CD8-positive, alpha-beta T cell (primary cell): ENCODE measurements at regions of chr17 and their contacts with region 1.

Region 1: DNA sequence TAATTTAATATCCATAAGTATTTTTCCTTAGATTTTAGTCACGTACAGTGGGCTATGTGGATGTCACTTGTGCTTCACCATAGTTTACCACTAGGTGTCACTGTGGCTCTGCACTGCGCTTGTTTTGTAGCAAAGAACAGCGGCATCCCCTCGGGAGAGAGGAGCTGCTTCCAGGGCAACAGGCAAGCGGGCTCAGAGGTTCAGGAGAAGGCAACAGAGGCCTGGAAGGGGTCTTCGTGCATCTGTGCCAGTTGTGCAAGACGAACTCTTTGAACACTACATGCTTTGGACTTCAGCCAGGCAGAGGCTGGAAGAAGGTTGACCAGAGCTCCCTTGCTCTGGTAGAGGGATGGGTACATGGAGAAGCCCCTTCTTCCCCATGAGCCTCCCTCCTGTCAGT is 20.6 kb downstream of the CYB561 start:
- DNase-seq: peak; percentile 35 to 84 (median 73)
- ATAC-seq: peak; percentile 84
- H3K4me3 ChIP-seq: no peak overlapping the region
- H3K4me3 Mint-ChIP-seq: no peak overlapping the region
- H3K27ac ChIP-seq: no peak overlapping the region
- H3K27ac Mint-ChIP-seq: no peak overlapping the region
- H3K4me1 ChIP-seq: peaks cover 29% of the 10 kb centered on the region
- H3K4me1 Mint-ChIP-seq: peaks cover 43% of the 10 kb centered on the region
- H3K27me3 ChIP-seq: no peaks in the 10 kb centered on the region
- H3K27me3 Mint-ChIP-seq: no peaks in the 10 kb centered on the region
- CTCF ChIP-seq: peak; percentile 99

Region 2: GRCh38 chr17:63406689-63407330 is 18.7 kb before region 1 on chr17:
- CTCF ChIA-PET with region 1: interaction called, 26 read pairs
- POLR2A ChIA-PET with region 1: interaction called, 4 read pairs
- intact Hi-C with region 1: no loop called
- DNase-seq: peak; percentile 35 to 85 (median 65)
- ATAC-seq: peak; percentile 87
- H3K4me3 ChIP-seq: no peak overlapping the region
- H3K4me3 Mint-ChIP-seq: no peak overlapping the region
- H3K27ac ChIP-seq: no peak overlapping the region
- H3K27ac Mint-ChIP-seq: no peak overlapping the region
- H3K4me1 ChIP-seq: no peaks in the 10 kb centered on the region
- H3K4me1 Mint-ChIP-seq: peaks cover 2% of the 10 kb centered on the region
- H3K27me3 ChIP-seq: no peaks in the 10 kb centered on the region
- H3K27me3 Mint-ChIP-seq: no peaks in the 10 kb centered on the region
- CTCF ChIP-seq: peak; percentile 83

Region 3: DNA sequence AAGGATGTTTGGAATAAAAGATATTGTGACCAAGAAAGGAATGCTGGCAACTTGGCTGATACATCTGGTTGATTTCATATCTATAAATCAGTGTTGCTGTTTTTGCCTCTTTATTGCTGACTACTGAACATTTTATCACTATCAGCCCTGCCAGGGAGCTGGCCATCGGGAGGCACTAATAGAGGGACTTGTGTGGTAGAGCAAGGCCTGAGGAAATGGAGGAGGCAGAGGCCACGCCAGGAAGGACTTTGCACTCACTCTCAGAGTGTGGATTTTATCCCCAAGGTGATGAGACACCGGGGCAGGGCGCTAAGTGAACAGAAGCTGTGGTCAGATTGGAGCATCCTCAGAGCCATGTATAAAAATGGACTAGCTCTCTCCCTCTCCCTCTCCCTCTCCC is 29.9 kb after region 1 on chr17:
- CTCF ChIA-PET with region 1: interaction called, 10 read pairs
- POLR2A ChIA-PET with region 1: no interaction called
- intact Hi-C with region 1: no loop called
- DNase-seq: no peak
- ATAC-seq: no peak
- H3K4me3 ChIP-seq: no peak overlapping the region
- H3K4me3 Mint-ChIP-seq: no peak overlapping the region
- H3K27ac ChIP-seq: no peak overlapping the region
- H3K27ac Mint-ChIP-seq: no peak overlapping the region
- H3K4me1 ChIP-seq: no peaks in the 10 kb centered on the region
- H3K4me1 Mint-ChIP-seq: peaks cover 4% of the 10 kb centered on the region
- H3K27me3 ChIP-seq: no peaks in the 10 kb centered on the region
- H3K27me3 Mint-ChIP-seq: peaks cover 2% of the 10 kb centered on the region
- CTCF ChIP-seq: no peak

Region 4: GRCh38 chr17:63549946-63550807 is 124.7 kb after region 1 on chr17 and contains the start of gene DCAF7:
- CTCF ChIA-PET with region 1: interaction called, 13 read pairs
- POLR2A ChIA-PET with region 1: interaction called, 6 read pairs
- intact Hi-C with region 1: loop called in 1 of 2 experiments (anchors 10 kb)
- DNase-seq: peak; percentile 99 to 100 (median 99)
- ATAC-seq: peak; percentile 94
- H3K4me3 ChIP-seq: peak within 1 kb of the TSS; percentile 99 to 100
- H3K4me3 Mint-ChIP-seq: peak within 1 kb of the TSS; percentile 98
- H3K27ac ChIP-seq: peak within 1 kb of the TSS; percentile 86 to 97
- H3K27ac Mint-ChIP-seq: peak within 1 kb of the TSS; percentile 98
- H3K4me1 ChIP-seq: peaks cover 39% of the 10 kb centered on the region
- H3K4me1 Mint-ChIP-seq: peaks cover 45% of the 10 kb centered on the region
- H3K27me3 ChIP-seq: no peaks in the 10 kb centered on the region
- H3K27me3 Mint-ChIP-seq: no peaks in the 10 kb centered on the region
- CTCF ChIP-seq: no peak
- total RNA-seq, gene DCAF7: 10.7 to 11.7 TPM

Region 5: DNA sequence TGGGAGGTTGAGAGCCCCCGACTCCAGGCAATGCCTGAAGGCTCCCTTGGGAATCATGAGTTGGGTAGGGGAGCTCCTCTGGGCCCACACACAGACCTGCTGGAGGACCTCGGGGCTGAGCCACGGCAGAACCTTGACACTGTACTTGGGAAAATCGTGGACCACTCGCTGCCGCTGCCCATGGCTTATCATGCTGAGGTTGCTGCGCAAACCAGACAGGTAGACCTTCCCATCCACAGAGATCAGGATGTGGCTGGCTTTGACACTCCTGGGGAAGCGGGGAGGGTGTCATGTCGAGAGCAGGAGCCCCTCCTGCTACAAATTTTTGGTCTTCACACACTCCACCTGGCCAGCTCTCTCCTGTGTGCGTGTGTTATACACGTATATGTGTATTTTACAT is 281.7 kb after region 1 on chr17:
- CTCF ChIA-PET with region 1: interaction called, 36 read pairs
- POLR2A ChIA-PET with region 1: interaction called, 7 read pairs
- intact Hi-C with region 1: loop called (anchors 1 to 5 kb)
- DNase-seq: peak in 6 of 9 experiments; percentile 36 to 76 (median 64)
- ATAC-seq: peak; percentile 58
- H3K4me3 ChIP-seq: peak overlapping the region; percentile 10 to 42
- H3K4me3 Mint-ChIP-seq: peak overlapping the region; percentile 78
- H3K27ac ChIP-seq: peak overlapping the region; percentile 67 to 73
- H3K27ac Mint-ChIP-seq: peak overlapping the region; percentile 94
- H3K4me1 ChIP-seq: peaks cover 85% of the 10 kb centered on the region
- H3K4me1 Mint-ChIP-seq: peaks cover 83% of the 10 kb centered on the region
- H3K27me3 ChIP-seq: no peaks in the 10 kb centered on the region
- H3K27me3 Mint-ChIP-seq: no peaks in the 10 kb centered on the region
- CTCF ChIP-seq: no peak

Region 6: DNA sequence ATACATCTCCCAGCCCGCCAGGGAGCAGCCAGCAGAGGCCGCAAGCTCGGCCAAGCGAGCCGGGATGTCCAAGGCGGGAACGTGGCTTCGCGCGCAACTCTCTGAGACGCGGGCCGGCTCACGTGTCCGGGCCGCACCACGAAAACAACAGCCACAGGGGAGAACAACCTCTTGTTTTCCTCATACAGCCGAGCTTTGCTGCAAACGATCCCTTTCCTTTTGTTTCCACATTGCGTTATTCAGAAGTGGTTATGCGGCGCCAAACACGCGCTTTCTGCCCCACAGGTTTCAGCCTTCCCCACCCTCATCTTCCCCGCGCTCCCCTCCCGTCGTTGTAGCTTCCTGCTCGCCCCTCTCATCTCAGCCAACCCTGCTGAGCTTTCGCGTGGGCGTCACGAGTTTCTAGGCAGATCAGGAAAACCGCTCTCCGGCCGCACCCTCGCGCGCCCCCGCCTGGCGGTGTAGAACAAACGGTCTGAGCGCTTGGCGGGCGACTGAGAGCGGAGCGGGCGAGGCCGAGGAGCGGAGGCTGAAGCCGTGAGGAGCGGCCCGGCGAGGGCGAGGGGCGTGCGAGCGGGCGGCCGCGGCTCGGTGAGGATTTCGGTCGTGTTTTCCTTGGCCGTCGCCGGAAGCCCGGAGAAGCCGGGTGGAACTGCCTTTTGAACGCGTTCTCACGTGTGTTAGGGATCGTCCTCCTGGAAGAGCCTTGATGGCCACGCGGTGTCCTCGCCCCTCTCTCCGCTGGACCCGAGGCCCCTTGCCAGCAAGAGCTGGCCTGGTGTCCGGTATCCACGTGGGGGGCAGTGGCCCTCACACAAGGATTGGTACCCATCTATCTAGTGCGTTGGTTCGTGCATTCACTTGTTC is 423.6 kb after region 1 on chr17:
- CTCF ChIA-PET with region 1: interaction called, 3 read pairs
- POLR2A ChIA-PET with region 1: no interaction called
- intact Hi-C with region 1: loop called in 1 of 2 experiments (anchors 2 kb)
- DNase-seq: peak; percentile 88 to 97 (median 95)
- ATAC-seq: peak; percentile 98
- H3K4me3 ChIP-seq: peak overlapping the region; percentile 34 to 55
- H3K4me3 Mint-ChIP-seq: peak overlapping the region; percentile 81
- H3K27ac ChIP-seq: peak overlapping the region; percentile 23 to 81
- H3K27ac Mint-ChIP-seq: peak overlapping the region; percentile 90
- H3K4me1 ChIP-seq: peaks cover 12% of the 10 kb centered on the region
- H3K4me1 Mint-ChIP-seq: peaks cover 17% of the 10 kb centered on the region
- H3K27me3 ChIP-seq: no peaks in the 10 kb centered on the region
- H3K27me3 Mint-ChIP-seq: no peaks in the 10 kb centered on the region
- CTCF ChIP-seq: peak; percentile 73